ENCODE measurements at regions of chr18 and their contacts with region 1.

Region 1: GRCh38 chr18:76620321-76621170 is 125.5 kb upstream of the ZNF516 start:
- DNase-seq: peak; percentile 81
- H3K4me3 Mint-ChIP-seq: peak overlapping the region; percentile 62
- H3K27ac Mint-ChIP-seq: peak overlapping the region; percentile 94
- H3K4me1 Mint-ChIP-seq: peaks cover 29% of the 10 kb centered on the region
- H3K27me3 Mint-ChIP-seq: no peaks in the 10 kb centered on the region
- CTCF ChIP-seq: peak; percentile 70

Region 2: GRCh38 chr18:76459687-76460350 is 160.7 kb before region 1 on chr18:
- CTCF ChIA-PET with region 1: interaction called, 8 read pairs
- POLR2A ChIA-PET with region 1: interaction called, 3 read pairs
- intact Hi-C with region 1: loop called (anchors 1 kb)
- DNase-seq: peak; percentile 98
- H3K4me3 Mint-ChIP-seq: peak overlapping the region; percentile 61
- H3K27ac Mint-ChIP-seq: peak overlapping the region; percentile 65
- H3K4me1 Mint-ChIP-seq: peaks cover 22% of the 10 kb centered on the region
- H3K27me3 Mint-ChIP-seq: no peaks in the 10 kb centered on the region
- CTCF ChIP-seq: no peak

Region 3: GRCh38 chr18:76565238-76566180 is 55.0 kb before region 1 on chr18:
- CTCF ChIA-PET with region 1: interaction called, 8 read pairs
- POLR2A ChIA-PET with region 1: interaction called, 43 read pairs
- intact Hi-C with region 1: loop called (anchors 1 kb)
- DNase-seq: peak; percentile 95
- H3K4me3 Mint-ChIP-seq: peak overlapping the region; percentile 64
- H3K27ac Mint-ChIP-seq: peak overlapping the region; percentile 98
- H3K4me1 Mint-ChIP-seq: peaks cover 34% of the 10 kb centered on the region
- H3K27me3 Mint-ChIP-seq: no peaks in the 10 kb centered on the region
- CTCF ChIP-seq: no peak

Region 4: DNA sequence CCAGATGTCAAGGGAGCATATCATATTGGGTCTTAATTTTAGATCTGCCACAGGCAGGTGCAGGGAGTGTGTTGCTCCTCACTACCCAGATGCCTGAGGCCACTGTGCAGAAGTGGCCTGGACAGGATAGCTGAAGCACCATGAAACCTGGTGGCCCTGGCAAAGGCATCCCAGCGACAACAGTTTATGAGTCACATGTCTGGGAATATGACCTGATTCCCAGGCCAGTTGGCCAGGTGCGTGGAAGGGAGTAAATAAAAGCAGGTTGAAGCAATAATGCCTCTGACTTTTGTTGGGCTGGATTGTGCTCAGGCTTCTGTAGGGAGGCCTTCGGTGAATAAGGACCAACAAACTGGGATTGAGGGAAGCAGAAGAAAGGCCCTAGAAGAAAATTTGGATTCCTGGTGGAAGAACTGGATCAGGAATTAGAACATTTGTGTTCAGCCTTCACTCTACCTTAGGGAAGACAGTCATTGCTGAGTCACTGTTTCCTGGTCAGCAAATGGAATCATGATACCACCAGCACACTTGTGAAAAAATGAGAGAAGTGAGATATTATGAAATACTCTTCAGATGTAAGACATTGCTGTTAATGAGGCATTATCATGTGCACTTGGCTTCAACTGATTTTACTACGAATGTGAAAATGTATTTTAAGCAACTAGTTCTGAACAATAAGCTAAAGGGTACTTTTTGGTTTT is 47.1 kb before region 1 on chr18:
- CTCF ChIA-PET with region 1: interaction called, 4 read pairs
- POLR2A ChIA-PET with region 1: interaction called, 10 read pairs
- intact Hi-C with region 1: no loop called
- DNase-seq: peak; percentile 86
- H3K4me3 Mint-ChIP-seq: no peak overlapping the region
- H3K27ac Mint-ChIP-seq: peak overlapping the region; percentile 86
- H3K4me1 Mint-ChIP-seq: peaks cover 21% of the 10 kb centered on the region
- H3K27me3 Mint-ChIP-seq: no peaks in the 10 kb centered on the region
- CTCF ChIP-seq: no peak

Measured in MCF 10A (cell line).